AG04450 (cell line): ENCODE measurements at regions of chr17 and their contacts with region 1.

Region 1: GRCh38 chr17:36601303-36602029 is at the start of gene MRM1:
- DNase-seq: peak; percentile 76
- H3K4me3 ChIP-seq: peak within 1 kb of the TSS; percentile 95
- H3K27ac ChIP-seq: peak within 1 kb of the TSS; percentile 75
- H3K27me3 ChIP-seq: no peaks in the 10 kb centered on the region
- CTCF ChIP-seq: peak; percentile 16; the same call in 1 of the 2 replicates
- polyA plus RNA-seq, gene MRM1: 2.0 and 2.4 TPM in 2 replicates

Region 2: GRCh38 chr17:35965272-35965671 is 636.2 kb before region 1 on chr17:
- CTCF ChIA-PET with region 1: no interaction called
- POLR2A ChIA-PET with region 1: no interaction called
- DNase-seq: no peak
- H3K4me3 ChIP-seq: no peak overlapping the region
- H3K27ac ChIP-seq: no peak overlapping the region
- H3K27me3 ChIP-seq: no peaks in the 10 kb centered on the region
- CTCF ChIP-seq: no peak

Region 3: DNA sequence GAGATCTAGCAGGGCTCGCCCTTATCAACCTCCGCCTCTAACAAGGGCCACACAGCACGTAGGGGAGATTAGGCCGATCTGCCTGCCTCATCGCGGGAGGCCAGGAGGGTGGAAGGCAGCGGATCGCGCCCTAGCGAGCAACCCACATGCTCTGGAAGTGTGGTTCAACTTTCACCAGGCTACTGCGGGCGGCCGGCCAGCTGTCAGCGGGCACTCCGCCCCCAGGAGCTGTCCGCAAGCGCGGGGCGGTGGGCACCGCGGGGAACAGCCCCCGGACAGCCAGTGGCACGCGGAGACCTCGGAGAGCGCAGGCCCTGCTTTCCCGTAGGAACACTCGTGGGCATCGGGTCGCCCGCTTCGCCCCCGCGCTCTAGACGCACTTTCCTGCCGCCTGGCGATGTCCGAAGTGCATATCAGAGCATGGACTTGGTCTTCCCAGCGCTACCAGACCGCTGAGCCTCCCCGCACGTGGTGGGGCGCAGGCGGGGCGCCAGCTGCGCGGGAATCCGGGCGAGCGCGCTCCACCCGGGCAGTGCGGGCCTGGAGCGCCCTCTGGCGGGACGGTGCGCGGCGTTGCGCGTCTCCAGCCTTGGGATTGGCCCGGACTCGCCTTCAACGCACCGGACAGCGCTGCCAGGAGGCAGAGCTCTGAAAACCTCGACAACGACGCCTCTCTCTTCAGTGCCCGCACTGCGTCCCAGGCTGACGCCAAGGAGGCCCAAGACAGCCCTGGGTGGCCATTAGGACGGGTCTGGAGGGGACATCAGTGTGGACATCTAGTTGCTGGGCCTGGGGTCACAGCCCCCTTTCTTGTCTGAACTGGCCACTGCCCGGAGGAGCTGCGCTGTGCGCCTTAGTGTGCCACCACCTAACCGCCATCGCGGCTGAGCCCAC is 118.6 kb before region 1 on chr17:
- CTCF ChIA-PET with region 1: no interaction called
- POLR2A ChIA-PET with region 1: no interaction called
- DNase-seq: peak; percentile 38
- H3K4me3 ChIP-seq: peak overlapping the region; percentile 40
- H3K27ac ChIP-seq: no peak overlapping the region
- H3K27me3 ChIP-seq: peaks cover 11% of the 10 kb centered on the region
- CTCF ChIP-seq: peak; percentile 79

Region 4: GRCh38 chr17:37107406-37108083 is 506.1 kb after region 1 on chr17:
- CTCF ChIA-PET with region 1: interaction called, 15 read pairs
- POLR2A ChIA-PET with region 1: no interaction called
- DNase-seq: no peak
- H3K4me3 ChIP-seq: no peak overlapping the region
- H3K27ac ChIP-seq: no peak overlapping the region
- H3K27me3 ChIP-seq: no peaks in the 10 kb centered on the region
- CTCF ChIP-seq: no peak

Region 5: DNA sequence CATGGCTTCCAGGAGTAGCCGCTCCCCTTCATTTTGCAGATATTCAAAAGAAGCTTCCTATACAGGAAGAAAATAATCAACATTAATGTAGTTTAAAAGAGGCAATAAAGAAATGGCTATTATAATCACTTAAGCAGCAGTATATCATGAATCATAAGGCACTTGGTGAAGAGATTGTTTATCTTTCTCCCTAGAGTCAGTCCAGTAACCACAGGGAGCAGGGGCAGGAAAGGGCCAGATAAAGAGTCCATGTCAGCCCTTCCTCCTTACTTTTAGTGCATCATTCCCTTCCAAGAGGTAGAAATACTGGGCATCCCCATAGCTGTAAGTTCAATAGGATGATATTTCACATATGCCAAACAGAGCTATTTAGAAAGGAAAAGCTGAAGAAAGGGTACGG is 589.8 kb after region 1 on chr17:
- CTCF ChIA-PET with region 1: interaction called, 10 read pairs
- POLR2A ChIA-PET with region 1: no interaction called
- DNase-seq: peak; percentile 16
- H3K4me3 ChIP-seq: no peak overlapping the region
- H3K27ac ChIP-seq: no peak overlapping the region
- H3K27me3 ChIP-seq: no peaks in the 10 kb centered on the region
- CTCF ChIP-seq: no peak

Region 6: DNA sequence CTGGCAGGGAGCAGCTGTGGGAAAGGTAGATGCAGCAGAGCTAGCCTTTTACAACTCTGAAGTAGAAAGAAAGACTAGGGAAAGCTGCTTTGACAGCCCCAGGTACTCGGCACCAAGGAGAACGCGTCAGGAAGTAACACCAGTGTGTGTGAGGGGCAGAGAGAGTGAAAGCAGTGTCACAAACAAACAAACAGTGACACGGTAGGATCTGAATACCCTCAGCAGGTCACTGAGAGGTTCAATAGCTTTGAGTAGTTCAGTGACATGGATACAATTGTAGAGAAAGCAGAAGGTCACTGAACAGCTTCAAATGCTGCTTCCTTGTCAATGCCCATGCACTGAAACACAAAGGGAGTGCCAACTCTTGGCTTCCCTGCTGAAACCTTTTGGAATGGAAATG is 624.0 kb after region 1 on chr17:
- CTCF ChIA-PET with region 1: interaction called, 23 read pairs
- POLR2A ChIA-PET with region 1: no interaction called
- DNase-seq: no peak
- H3K4me3 ChIP-seq: no peak overlapping the region
- H3K27ac ChIP-seq: no peak overlapping the region
- H3K27me3 ChIP-seq: no peaks in the 10 kb centered on the region
- CTCF ChIP-seq: no peak